Endothelial cell of umbilical vein (primary cell): ENCODE measurements at regions of chr20 and their contacts with region 1.

Region 1: GRCh38 chr20:8790442-8791074 is 278.3 kb upstream of the PLCB4 start:
- DNase-seq: peak; percentile 75
- H3K4me3 ChIP-seq: no peak overlapping the region
- H3K27ac ChIP-seq: no peak overlapping the region
- H3K4me1 ChIP-seq: no peaks in the 10 kb centered on the region
- H3K27me3 ChIP-seq: no peaks in the 10 kb centered on the region
- CTCF ChIP-seq: peak; percentile 71 to 85
- POLR2A ChIP-seq: no peak

Region 2: GRCh38 chr20:8756410-8756809 is 34.1 kb before region 1 on chr20:
- CTCF ChIA-PET with region 1: interaction called, 14 read pairs
- POLR2A ChIA-PET with region 1: no interaction called
- dilution Hi-C with region 1: no loop called
- intact Hi-C with region 1: no loop called
- DNase-seq: peak; percentile 62
- H3K4me3 ChIP-seq: no peak overlapping the region
- H3K27ac ChIP-seq: no peak overlapping the region
- H3K4me1 ChIP-seq: peaks cover 6% of the 10 kb centered on the region
- H3K27me3 ChIP-seq: no peaks in the 10 kb centered on the region
- CTCF ChIP-seq: no peak
- POLR2A ChIP-seq: no peak

Region 3: GRCh38 chr20:8812817-8813216 is 22.3 kb after region 1 on chr20:
- CTCF ChIA-PET with region 1: interaction called, 13 read pairs
- POLR2A ChIA-PET with region 1: no interaction called
- dilution Hi-C with region 1: no loop called
- intact Hi-C with region 1: no loop called
- DNase-seq: peak; percentile 86
- H3K4me3 ChIP-seq: no peak overlapping the region
- H3K27ac ChIP-seq: peak overlapping the region; percentile 49
- H3K4me1 ChIP-seq: peaks cover 12% of the 10 kb centered on the region
- H3K27me3 ChIP-seq: no peaks in the 10 kb centered on the region
- CTCF ChIP-seq: no peak
- POLR2A ChIP-seq: no peak

Region 4: GRCh38 chr20:8829256-8829655 is 38.7 kb after region 1 on chr20:
- CTCF ChIA-PET with region 1: no interaction called
- POLR2A ChIA-PET with region 1: no interaction called
- dilution Hi-C with region 1: no loop called
- intact Hi-C with region 1: no loop called
- DNase-seq: no peak
- H3K4me3 ChIP-seq: no peak overlapping the region
- H3K27ac ChIP-seq: no peak overlapping the region
- H3K4me1 ChIP-seq: no peaks in the 10 kb centered on the region
- H3K27me3 ChIP-seq: no peaks in the 10 kb centered on the region
- CTCF ChIP-seq: peak in 1 of 2 donors; percentile 9
- POLR2A ChIP-seq: no peak

Region 5: GRCh38 chr20:8943631-8944030 is 153.1 kb after region 1 on chr20:
- CTCF ChIA-PET with region 1: no interaction called
- POLR2A ChIA-PET with region 1: no interaction called
- dilution Hi-C with region 1: no loop called
- intact Hi-C with region 1: no loop called
- DNase-seq: no peak
- H3K4me3 ChIP-seq: no peak overlapping the region
- H3K27ac ChIP-seq: no peak overlapping the region
- H3K4me1 ChIP-seq: no peaks in the 10 kb centered on the region
- H3K27me3 ChIP-seq: no peaks in the 10 kb centered on the region
- CTCF ChIP-seq: no peak
- POLR2A ChIP-seq: no peak

Region 6: GRCh38 chr20:9068851-9069663 is 278.5 kb after region 1 on chr20 and contains the start of gene PLCB4:
- CTCF ChIA-PET with region 1: interaction called, 4 read pairs
- POLR2A ChIA-PET with region 1: no interaction called
- dilution Hi-C with region 1: no loop called
- intact Hi-C with region 1: loop called (anchors 10 kb)
- DNase-seq: peak; percentile 46
- H3K4me3 ChIP-seq: peak within 1 kb of the TSS; percentile 42 to 81 (median 69)
- H3K27ac ChIP-seq: no peak within 1 kb of the TSS
- H3K4me1 ChIP-seq: no peaks in the 10 kb centered on the region
- H3K27me3 ChIP-seq: peaks cover 0 to 5% of the 10 kb centered on the region in 2 experiments
- CTCF ChIP-seq: no peak
- POLR2A ChIP-seq: no peak
- total RNA-seq, gene PLCB4: 1.6 and 1.7 TPM in 2 replicates

Region 7: DNA sequence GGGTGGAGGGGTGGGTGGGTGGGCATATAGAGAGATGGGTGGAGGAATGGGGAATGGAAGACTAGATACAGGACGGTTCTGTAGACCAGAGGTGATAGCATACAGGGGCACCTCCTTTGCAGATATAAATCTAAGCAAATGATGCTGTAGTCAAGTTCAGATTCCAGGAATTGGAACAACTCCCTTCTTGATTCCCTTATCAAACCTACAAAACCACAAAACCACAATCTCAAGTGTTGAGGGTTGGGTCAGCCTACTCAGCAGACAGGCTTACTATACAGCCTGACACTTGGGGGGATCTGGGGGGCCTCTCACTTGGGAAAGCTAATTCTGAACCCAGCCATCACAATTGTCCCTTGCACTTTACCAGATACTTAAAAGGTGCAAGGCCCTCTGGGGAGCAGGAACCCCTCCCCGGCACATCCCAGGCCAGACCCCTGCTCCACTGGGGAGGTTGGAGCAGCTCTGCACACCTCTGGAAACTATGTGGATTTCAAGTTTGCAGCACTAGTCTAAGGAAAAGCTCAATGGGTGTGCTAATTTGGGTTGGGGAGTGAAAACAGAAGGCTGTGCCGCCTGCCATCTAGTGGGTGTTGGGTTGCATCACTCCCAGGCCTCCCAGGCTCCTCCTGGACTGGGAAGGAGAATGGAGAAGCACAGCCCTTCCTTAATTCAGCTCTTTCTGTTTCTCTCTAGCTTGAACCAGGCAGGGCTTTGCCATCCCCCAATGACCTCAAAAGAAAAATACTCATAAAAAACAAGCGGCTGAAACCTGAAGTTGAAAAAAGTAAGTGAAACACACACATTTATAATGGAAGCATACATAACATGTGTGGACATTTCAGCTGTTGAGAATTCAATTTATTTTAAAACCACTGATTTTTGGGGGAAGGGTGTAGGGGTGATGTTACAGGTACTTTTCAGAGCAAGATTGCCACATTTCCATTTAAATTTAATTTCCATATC is 602.6 kb after region 1 on chr20:
- CTCF ChIA-PET with region 1: interaction called, 38 read pairs
- POLR2A ChIA-PET with region 1: no interaction called
- dilution Hi-C with region 1: no loop called
- intact Hi-C with region 1: loop called (anchors 1 kb)
- DNase-seq: peak; percentile 37
- H3K4me3 ChIP-seq: no peak overlapping the region
- H3K27ac ChIP-seq: no peak overlapping the region
- H3K4me1 ChIP-seq: no peaks in the 10 kb centered on the region
- H3K27me3 ChIP-seq: no peaks in the 10 kb centered on the region
- CTCF ChIP-seq: peak; percentile 54 to 80
- POLR2A ChIP-seq: no peak